CD14-positive monocyte (primary cell): ENCODE measurements at regions of chr5 and their contacts with region 1.

Region 1: DNA sequence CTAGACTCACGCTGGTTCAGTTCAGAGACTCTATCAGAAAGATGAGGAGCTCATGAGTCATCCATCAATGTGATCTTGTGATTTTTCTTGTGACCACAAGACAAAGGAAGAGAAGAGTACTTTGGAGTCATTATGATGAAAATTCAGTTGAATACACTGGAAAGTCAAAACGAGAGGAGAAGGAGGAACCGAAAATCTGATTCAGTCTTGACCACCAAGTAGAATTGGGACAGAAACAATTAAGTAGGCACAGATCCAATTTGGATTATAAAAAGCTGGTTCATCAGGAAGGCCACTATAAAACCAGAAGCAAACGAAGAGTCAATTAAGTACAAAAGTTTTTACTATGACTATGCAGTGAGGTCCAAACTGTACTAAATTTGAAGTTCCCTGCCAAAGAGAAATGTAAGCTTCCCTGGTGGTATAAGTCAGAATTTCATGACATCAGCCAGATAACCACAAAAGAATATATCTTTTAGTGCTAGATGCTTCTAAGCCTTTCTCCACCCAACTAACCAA is 90.9 kb downstream of the THBS4 start:
- DNase-seq: peak; percentile 96 to 99 (median 98)
- H3K4me3 ChIP-seq: peak overlapping the region in 1 of 3 experiments; percentile 50
- H3K4me3 Mint-ChIP-seq: peak overlapping the region; percentile 42 to 81
- H3K27ac ChIP-seq: peak overlapping the region; percentile 96 to 99
- H3K27ac Mint-ChIP-seq: peak overlapping the region; percentile 99 to 100 (median 100)
- H3K4me1 ChIP-seq: peaks cover 70% of the 10 kb centered on the region in 2 donors
- H3K4me1 Mint-ChIP-seq: peaks cover 69% of the 10 kb centered on the region
- H3K27me3 ChIP-seq: no peaks in the 10 kb centered on the region
- H3K27me3 Mint-ChIP-seq: no peaks in the 10 kb centered on the region
- CTCF ChIP-seq: peak; percentile 50

Region 2: DNA sequence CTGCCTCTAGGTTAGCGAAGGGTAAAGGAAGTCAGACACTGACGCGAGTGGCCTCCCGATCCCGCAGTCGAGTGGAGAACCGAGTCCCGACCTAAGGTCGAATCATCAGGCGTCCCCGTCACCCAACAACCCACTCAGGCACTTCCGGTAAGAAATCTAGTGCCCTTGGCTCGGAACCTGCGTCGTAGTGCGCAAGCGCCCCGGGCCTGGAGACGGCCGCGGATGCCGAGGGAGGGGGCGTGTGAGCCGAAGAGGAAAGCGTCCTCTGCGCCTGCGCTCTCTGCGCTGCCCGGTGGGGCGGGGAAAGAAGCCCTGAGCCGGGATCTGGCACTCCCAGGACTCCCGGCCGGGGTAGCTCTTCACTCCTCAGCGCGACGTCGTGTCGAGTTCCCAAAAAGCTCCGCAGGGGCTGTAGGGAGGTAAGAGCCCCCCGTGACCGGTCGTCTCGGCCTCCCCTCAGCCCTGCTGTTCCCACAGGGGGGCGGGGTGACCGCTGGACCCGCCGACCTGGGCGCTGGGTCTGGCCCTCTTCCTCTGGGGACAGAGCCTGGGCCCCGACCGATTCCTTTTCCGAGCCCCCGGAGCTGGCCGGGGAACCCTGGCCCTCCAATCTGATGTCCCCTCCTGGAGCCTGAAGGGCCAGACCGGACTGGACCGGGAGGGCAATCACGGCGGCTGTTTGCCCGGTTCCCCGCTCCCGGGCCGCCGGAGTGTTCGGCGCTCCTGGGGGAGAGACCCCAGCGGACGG is 281.9 kb after region 1 on chr5 and contains the start of gene ZFYVE16:
- intact Hi-C with region 1: loop called (anchors 5 to 10 kb)
- DNase-seq: peak; percentile 98 to 99 (median 99)
- H3K4me3 ChIP-seq: peak within 1 kb of the TSS; percentile 80 to 97 (median 95)
- H3K4me3 Mint-ChIP-seq: peak within 1 kb of the TSS; percentile 90 to 94
- H3K27ac ChIP-seq: peak within 1 kb of the TSS; percentile 93 to 100
- H3K27ac Mint-ChIP-seq: peak within 1 kb of the TSS; percentile 97 to 100 (median 99)
- H3K4me1 ChIP-seq: peaks cover 31 to 44% of the 10 kb centered on the region in 2 donors
- H3K4me1 Mint-ChIP-seq: peaks cover 40% of the 10 kb centered on the region
- H3K27me3 ChIP-seq: no peaks in the 10 kb centered on the region
- H3K27me3 Mint-ChIP-seq: peaks cover 0 to 2% (median 0%) of the 10 kb centered on the region in 3 donors
- CTCF ChIP-seq: peak; percentile 46
- polyA plus RNA-seq, gene ZFYVE16: 9.4 to 15.8 (median 10.7) TPM